PC-9 (cell line): ENCODE measurements at regions of chr2 and their contacts with region 1.

Region 1: GRCh38 chr2:173557497-173557896 is 202.8 kb downstream of the CDCA7 start:
- DNase-seq: no peak
- H3K4me3 ChIP-seq: no peak overlapping the region
- H3K27ac ChIP-seq: no peak overlapping the region
- H3K4me1 ChIP-seq: no peaks in the 10 kb centered on the region
- H3K27me3 ChIP-seq: peaks cover 90% of the 10 kb centered on the region
- CTCF ChIP-seq: no peak

Region 2: DNA sequence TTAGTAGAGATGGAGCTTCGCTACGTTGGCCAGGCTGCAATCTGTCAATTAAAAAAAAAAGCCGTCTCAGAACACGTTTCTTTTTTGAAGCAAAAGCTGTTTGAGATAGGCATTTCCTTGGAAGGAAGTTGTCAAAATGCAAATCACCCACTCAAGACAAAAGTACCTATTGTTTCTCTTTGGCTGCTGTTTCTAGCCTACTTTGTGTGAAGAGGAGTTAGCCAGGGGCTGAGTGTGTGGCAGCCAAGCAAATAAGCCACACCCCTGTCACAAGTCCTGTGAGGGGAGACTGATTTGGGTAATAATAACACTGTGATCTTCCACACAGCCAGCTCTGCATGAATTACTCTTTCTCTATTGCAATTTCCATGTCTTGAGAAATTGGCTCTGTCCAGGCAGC is 250.2 kb before region 1 on chr2:
- CTCF ChIA-PET with region 1: no interaction called
- POLR2A ChIA-PET with region 1: interaction called, 10 read pairs
- intact Hi-C with region 1: no loop called
- DNase-seq: no peak
- H3K4me3 ChIP-seq: no peak overlapping the region
- H3K27ac ChIP-seq: no peak overlapping the region
- H3K4me1 ChIP-seq: no peaks in the 10 kb centered on the region
- H3K27me3 ChIP-seq: no peaks in the 10 kb centered on the region
- CTCF ChIP-seq: no peak

Region 3: DNA sequence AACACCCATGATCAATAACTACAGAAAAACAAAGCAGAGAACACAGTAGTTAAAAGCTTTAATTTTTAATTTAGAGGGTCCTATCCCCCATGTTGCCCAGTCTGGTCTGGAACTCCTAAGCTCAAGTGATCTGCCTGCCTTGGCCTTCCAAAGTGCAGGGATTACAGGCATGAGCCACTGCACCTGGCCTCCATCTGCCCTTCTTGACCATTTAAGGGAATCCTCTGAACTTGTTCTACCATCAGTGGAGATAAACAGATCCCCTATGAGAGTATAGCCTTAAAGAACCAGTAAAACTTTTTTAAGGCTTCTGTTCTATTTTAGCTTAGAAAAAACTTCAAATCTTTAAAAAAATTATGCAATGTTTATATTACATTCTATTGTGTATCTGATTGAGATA is 1637.5 kb after region 1 on chr2:
- CTCF ChIA-PET with region 1: no interaction called
- POLR2A ChIA-PET with region 1: no interaction called
- intact Hi-C with region 1: no loop called
- DNase-seq: no peak
- H3K4me3 ChIP-seq: no peak overlapping the region
- H3K27ac ChIP-seq: no peak overlapping the region
- H3K4me1 ChIP-seq: no peaks in the 10 kb centered on the region
- H3K27me3 ChIP-seq: no peaks in the 10 kb centered on the region
- CTCF ChIP-seq: no peak